Left ventricle myocardium inferior (tissue), 1 donor: ENCODE measurements at regions of chr22 and their contacts with region 1.

Region 1: DNA sequence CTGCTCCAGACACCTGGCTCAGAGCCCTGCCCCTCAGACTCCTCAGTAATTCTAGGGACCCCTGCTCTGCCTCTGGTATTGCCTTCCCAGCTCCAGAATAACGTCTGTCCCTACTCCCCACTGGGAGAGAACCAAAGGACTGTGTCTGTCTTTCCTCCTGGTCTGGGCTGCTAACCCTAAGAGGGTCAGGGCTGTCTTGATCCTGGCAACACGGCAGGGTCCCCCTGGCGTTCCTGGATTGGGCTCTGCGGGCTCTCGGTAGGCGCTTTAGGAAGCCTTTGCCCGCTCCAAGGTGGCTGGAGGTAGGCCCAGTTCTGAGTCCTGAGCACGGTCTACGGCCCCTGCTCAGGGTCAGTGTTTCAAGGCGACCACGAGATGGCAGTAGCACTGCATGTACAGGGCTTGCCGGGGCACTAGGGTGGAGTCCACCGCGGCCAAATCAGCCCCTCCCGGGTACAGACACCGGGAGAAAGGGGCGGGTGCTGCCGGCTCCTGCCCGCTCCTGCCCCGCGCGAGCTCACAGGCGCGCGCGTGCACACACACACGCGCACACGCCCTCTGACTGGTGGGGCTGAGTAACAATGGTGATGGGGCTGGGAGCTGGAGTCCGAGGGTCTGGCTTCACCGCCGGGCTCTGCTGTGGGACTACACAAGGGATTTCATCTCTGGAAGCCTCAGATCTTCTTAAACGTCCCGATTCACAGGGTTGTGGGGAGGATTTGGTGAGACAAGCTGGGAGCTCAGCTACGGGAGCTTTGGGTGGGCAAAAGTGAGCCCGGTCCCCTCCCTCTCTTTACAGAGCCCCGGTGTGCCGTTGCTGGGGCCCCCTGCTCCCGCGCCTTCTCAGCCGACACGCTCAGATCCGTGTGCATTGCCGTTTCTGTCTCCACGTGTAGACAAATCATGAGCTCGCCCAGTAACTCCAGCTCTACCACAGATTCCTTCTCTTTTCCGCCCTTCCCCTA is 30.1 kb upstream of the HMOX1 start:
- DNase-seq: peak; percentile 91
- H3K4me3 ChIP-seq: peak overlapping the region; percentile 72
- H3K27ac ChIP-seq: peak overlapping the region; percentile 83
- H3K4me1 ChIP-seq: peaks cover 37% of the 10 kb centered on the region
- H3K27me3 ChIP-seq: no peaks in the 10 kb centered on the region
- CTCF ChIP-seq: peak; percentile 94

Region 2: GRCh38 chr22:35399678-35400334 is 49.0 kb after region 1 on chr22 and contains the start of gene MCM5:
- intact Hi-C with region 1: loop called (anchors 10 kb)
- DNase-seq: peak; percentile 98
- H3K4me3 ChIP-seq: peak within 1 kb of the TSS; percentile 94
- H3K27ac ChIP-seq: peak within 1 kb of the TSS; percentile 80
- H3K4me1 ChIP-seq: peaks cover 16% of the 10 kb centered on the region
- H3K27me3 ChIP-seq: no peaks in the 10 kb centered on the region
- CTCF ChIP-seq: no peak
- total RNA-seq, gene MCM5: 8.3 TPM

Region 3: DNA sequence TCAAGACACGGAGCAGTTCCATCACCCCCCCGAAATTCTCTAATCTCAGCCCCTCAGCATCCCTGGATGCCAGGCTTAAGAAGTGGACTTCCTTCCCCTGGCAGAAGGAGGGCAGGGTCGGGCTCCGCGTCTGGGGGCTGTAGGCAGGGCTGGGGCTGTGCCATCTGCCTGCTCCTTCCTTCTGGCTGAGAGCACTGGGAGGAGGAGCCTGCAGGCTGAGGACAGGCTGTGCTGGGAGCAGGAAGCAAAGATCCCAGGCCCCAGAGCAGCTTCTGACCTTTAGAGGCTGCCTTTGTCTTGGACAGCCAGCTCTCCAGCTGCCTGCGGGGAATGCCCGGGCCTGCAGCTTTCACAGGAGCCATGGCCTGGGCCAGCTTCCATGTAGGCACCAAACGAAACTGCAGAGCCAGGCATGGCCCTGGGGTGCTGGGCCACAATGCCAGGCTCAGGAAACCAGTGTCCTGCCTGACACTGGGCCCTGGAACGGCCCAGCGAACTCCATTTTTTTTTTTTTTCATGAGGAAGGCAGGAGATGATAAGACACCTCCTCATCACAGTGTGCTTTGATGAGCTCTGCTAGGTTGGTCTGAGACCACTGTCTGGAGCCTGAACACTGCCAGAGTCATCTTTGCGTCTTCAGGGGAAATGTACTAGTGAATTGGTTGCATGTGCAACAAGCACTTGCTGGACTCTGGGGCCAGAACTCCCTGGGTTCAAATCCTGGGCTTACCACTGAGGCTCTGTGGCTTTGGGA is 117.0 kb after region 1 on chr22:
- intact Hi-C with region 1: no loop called
- DNase-seq: peak; percentile 86
- H3K4me3 ChIP-seq: no peak overlapping the region
- H3K27ac ChIP-seq: peak overlapping the region; percentile 89
- H3K4me1 ChIP-seq: peaks cover 27% of the 10 kb centered on the region
- H3K27me3 ChIP-seq: no peaks in the 10 kb centered on the region
- CTCF ChIP-seq: no peak

Region 4: DNA sequence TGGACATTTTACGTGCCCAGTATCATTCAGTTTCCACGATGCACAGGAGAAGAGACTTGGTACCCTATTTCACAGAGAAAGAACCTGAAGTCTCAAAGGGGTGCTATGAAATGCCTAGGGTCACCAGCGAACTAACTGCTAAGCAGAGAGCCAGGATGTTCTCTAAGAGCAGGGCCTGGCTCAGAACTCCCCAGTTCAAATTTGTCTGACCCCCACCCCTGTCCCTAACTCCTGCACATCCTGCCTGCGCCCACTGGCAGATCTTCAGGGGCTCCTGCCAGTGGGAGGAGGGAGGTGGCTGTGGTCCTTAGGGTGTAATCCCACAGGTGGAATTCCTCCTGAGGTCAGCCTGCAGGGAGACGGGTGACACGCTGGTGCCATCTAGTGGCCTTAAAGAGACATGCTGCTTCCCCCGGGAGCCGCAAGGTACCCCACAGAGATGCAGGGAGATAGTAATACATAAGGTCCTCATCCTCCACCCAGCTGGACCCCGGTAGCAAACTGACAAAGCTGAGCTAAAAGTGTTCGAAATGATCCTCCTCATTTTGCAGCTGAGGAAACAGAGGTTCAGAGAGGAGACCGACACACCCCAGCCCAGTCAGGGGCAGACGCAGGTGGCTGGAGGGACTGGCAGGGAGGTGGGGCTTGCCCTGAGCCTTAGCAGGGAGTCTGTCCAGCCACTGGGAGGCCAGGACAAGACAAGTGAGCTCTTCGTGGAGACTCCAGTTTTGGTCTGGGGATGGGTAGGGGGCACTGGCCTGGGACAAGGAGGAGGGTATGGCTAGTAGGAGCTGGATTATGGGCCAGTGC is 232.2 kb after region 1 on chr22:
- intact Hi-C with region 1: loop called (anchors 10 kb)
- DNase-seq: peak; percentile 55
- H3K4me3 ChIP-seq: no peak overlapping the region
- H3K27ac ChIP-seq: peak overlapping the region; percentile 62
- H3K4me1 ChIP-seq: peaks cover 39% of the 10 kb centered on the region
- H3K27me3 ChIP-seq: no peaks in the 10 kb centered on the region
- CTCF ChIP-seq: peak; percentile 97